Spleen (tissue), 13 donors: ENCODE measurements at regions of chr6 and their contacts with region 1.

Region 1: DNA sequence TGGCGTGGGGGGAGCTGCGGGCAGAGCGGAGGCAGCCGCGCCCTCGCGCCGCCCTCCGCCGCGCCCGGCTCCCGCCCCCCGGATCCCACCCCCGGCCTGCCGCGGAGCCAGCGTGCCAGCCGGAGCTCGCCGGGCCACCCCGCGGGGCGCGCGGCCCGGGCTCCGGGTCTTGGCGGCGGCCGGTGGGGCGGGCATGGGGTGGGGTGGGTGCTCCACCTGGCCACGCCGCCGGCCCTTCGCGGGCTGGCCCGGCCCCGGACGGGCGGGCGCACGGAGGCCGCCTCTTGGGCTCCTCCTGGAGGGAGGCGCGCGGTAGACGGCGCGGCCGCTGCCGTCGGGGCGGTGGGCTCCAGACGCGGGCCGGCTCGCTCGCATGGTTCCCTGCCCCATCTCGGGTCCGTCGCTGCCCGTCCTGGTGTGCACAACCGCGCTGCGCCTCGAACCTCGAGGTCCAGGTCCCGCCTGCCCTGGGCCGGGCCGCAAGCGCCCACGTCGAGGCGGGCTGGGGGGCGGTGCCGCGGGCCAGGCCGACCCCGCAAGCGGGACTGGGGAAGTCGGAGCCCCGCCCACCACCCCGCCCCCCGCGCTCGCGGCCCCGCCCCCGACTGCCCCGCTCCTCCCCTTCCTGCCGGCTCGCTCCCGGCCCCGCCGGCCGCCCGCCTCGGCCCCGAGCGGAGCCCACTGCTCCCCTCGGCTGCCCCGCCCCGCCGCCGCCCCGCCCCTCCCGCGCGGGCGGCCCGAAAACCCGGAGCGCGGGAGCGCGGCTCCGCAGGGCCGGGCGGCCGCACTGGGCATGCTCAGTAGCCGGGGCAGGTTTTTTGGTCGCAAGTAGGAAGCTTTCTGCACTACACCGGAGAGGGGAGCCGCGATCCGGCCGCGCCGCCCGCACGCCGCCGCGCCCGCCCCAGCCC is at the start of gene CDYL:
- DNase-seq: peak; percentile 97
- H3K4me3 ChIP-seq: peak within 1 kb of the TSS; percentile 56 to 94 (median 70)
- H3K27ac ChIP-seq: peak within 1 kb of the TSS; percentile 48 to 94 (median 88)
- H3K4me1 ChIP-seq: peaks cover 4 to 50% (median 36%) of the 10 kb centered on the region in 6 donors
- H3K27me3 ChIP-seq: no peaks in the 10 kb centered on the region
- CTCF ChIP-seq: peak in 6 of 11 experiments; percentile 8 to 56 (median 36)
- POLR2A ChIP-seq: peak in 2 of 3 donors; percentile 23 to 67
- total RNA-seq, gene CDYL: 33.5 to 48.4 (median 40.7) TPM

Region 2: DNA sequence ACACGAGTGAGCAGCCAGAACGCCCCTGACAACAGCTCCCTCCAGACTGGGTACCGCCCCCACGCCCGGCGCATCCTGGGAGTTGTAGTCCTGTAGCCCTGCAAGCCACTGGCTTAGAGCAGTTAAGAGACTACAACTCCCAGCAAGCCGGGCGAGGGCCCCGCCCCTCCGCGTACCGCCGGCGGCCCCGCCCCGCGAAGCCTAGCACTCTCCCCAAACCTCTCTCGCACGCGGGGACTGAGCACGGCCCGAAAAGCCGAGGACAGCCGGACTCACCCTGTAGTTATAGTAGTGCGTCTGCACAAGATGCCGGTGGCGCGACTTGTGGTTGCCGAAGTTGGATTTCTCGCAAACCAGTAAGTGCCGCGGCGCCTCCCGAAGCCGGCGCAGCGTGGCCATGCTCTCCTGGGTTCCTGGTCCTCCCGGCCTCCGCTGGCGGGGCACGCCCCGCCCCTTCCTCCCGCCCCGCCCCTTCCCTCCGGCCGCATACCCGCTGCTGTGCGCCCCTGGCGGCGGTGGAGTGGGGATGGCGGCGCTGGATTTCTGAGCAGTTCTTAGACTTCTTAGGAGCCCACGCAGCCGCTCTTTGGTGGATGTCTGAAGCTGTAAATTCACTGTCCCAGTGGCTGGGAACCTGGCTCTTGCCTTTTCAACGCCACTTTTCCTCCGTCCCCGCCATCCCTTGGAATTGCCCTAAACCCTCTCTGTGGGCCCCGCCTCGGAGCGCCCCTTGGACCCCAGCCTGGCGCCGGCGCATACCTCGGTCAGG is 227.9 kb after region 1 on chr6 and contains the start of gene RPP40:
- intact Hi-C with region 1: loop called (anchors 10 kb)
- DNase-seq: peak; percentile 99
- H3K4me3 ChIP-seq: peak within 1 kb of the TSS; percentile 74 to 98 (median 93)
- H3K27ac ChIP-seq: peak within 1 kb of the TSS; percentile 76 to 94 (median 92)
- H3K4me1 ChIP-seq: peaks cover 0 to 24% (median 10%) of the 10 kb centered on the region in 6 donors
- H3K27me3 ChIP-seq: no peaks in the 10 kb centered on the region
- CTCF ChIP-seq: peak; percentile 77 to 97 (median 94)
- POLR2A ChIP-seq: peak in 1 of 3 donors; percentile 30
- total RNA-seq, gene RPP40: 5.3 to 16.6 (median 8.0) TPM